ENCODE measurements at regions of chr2 and their contacts with region 1.

Region 1: GRCh38 chr2:3651691-3652648 is 6.0 kb upstream of the ALLC start:
- DNase-seq: peak; percentile 39 to 88 (median 82)
- H3K4me3 ChIP-seq: peak overlapping the region; percentile 28 to 71 (median 53)
- H3K27ac ChIP-seq: peak overlapping the region; percentile 15 to 95 (median 86)
- H3K27me3 ChIP-seq: no peaks in the 10 kb centered on the region
- CTCF ChIP-seq: peak in 3 of 56 donors; percentile 8 to 18 (median 16)

Region 2: DNA sequence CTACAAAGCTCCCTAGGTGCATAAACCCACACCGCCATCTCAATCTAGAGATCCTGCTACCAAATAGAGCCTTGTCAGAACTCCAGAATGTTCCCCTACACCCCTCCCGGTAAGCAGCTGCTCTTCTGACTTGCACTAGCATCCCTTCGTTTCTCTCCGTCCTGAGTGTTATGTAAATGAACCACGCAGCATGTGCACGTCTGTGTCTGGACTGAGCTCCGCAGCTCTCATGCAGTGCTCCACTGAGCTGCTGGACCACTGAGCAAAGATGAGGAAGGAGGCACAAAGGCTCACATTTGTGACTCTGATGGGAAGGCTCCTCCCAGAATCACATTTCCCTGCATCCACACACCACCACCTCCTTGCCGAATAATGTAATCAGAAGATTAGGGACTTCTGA is 1524.5 kb before region 1 on chr2:
- intact Hi-C with region 1: loop called in 1 of 2 experiments (anchors 10 kb)
- DNase-seq: peak in 3 of 10 donors; percentile 41 to 63 (median 43)
- H3K4me3 ChIP-seq: no peak overlapping the region
- H3K27ac ChIP-seq: peak overlapping the region in 33 of 59 donors; percentile 7 to 84 (median 47)
- H3K27me3 ChIP-seq: no peaks in the 10 kb centered on the region
- CTCF ChIP-seq: no peak

Region 3: GRCh38 chr2:3423492-3424175 is 228.3 kb before region 1 on chr2:
- intact Hi-C with region 1: loop called in 1 of 2 experiments (anchors 10 kb)
- DNase-seq: peak in 5 of 10 donors; percentile 60 to 70 (median 65)
- H3K4me3 ChIP-seq: no peak overlapping the region
- H3K27ac ChIP-seq: peak overlapping the region in 7 of 59 donors; percentile 4 to 53 (median 23)
- H3K27me3 ChIP-seq: no peaks in the 10 kb centered on the region
- CTCF ChIP-seq: peak; percentile 78 to 98 (median 93)